ENCODE measurements at regions of chr18 and their contacts with region 1.

Region 1: GRCh38 chr18:61893971-61894750 is 1.4 kb upstream of the RNF152 start:
- DNase-seq: peak; percentile 62 to 86 (median 76)
- H3K4me3 ChIP-seq: peak overlapping the region; percentile 61 to 92 (median 79)
- H3K27ac ChIP-seq: peak overlapping the region in 53 of 59 donors; percentile 4 to 88 (median 71)
- H3K27me3 ChIP-seq: peaks cover 0 to 6% (median 0%) of the 10 kb centered on the region in 45 donors
- CTCF ChIP-seq: peak in 48 of 56 donors; percentile 7 to 72 (median 44)

Region 2: GRCh38 chr18:61575419-61575818 is 318.7 kb before region 1 on chr18:
- intact Hi-C with region 1: loop called (anchors 5 to 10 kb)
- DNase-seq: no peak
- H3K4me3 ChIP-seq: no peak overlapping the region
- H3K27ac ChIP-seq: no peak overlapping the region
- H3K27me3 ChIP-seq: peaks cover 0 to 12% (median 0%) of the 10 kb centered on the region in 45 donors
- CTCF ChIP-seq: no peak

Region 3: DNA sequence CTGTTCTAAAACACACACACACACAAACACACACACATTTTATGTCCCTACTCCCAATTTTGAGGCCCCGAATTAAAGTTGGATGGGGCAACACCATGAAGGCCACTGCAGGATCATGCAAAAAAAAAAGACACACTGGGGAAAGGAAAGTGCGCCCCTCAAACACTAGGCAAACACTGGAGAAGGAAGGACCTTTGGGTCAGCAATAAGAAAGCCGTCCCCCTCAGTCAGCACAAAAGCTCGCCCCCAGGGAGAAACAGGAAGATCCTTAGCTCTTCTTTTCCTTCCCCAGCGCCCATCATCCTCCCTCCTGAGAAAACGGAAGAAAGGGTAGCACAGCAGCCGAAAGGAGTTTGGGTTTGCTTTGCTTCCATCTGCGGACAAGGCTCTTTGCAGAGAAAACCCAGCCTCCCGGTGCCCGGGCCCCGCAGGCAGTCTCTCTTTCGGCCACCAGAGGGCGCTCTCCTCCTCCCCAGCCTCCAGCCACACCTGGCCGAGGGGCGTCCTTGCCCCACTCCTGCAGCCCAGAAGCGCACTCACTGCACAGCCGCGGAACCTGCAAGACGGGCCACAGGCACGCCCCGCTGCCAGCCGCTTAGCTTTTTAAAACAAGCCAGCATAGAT is 312.5 kb before region 1 on chr18:
- intact Hi-C with region 1: loop called (anchors 5 to 10 kb)
- DNase-seq: peak; percentile 40 to 88 (median 66)
- H3K4me3 ChIP-seq: peak overlapping the region; percentile 13 to 63 (median 40)
- H3K27ac ChIP-seq: peak overlapping the region in 19 of 59 donors; percentile 2 to 66 (median 34)
- H3K27me3 ChIP-seq: peaks cover 0 to 12% (median 0%) of the 10 kb centered on the region in 45 donors
- CTCF ChIP-seq: peak; percentile 91 to 99 (median 97)

Region 4: DNA sequence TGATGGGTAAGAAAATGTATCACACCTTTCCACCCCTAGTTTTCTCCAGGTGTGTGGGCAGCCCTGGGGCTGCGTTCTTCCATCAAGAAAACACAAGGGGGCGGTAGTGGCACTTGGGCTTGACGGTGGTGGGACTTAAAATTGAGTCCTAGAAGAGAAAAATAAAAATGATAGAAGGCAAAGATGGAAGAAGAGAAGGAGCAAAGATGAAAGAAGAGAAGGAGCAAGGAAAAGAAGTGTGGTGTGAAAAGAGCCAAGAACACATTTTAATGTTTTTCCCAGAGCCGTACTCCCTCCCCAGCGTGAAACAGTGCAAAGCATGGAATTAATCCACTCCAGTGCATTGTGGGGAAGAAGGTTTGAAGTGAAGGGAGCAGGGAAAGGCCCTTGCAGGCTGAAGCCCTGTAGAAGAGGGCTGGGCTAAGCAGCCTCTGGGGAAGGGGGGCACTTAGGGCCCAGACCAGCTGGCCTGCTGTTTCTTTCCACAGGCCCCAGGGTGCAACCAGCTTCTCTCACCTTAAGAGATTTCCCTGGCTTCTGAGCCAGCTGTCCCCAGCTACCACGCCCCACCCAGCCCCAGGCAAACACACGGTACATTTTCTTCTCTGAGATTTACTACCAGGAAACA is 258.1 kb before region 1 on chr18:
- intact Hi-C with region 1: loop called (anchors 1 to 2 kb)
- DNase-seq: peak in 7 of 10 donors; percentile 9 to 55 (median 24)
- H3K4me3 ChIP-seq: peak overlapping the region in 2 of 59 donors; percentile 25 to 35
- H3K27ac ChIP-seq: peak overlapping the region in 17 of 59 donors; percentile 2 to 71 (median 23)
- H3K27me3 ChIP-seq: peaks cover 0 to 10% (median 0%) of the 10 kb centered on the region in 45 donors
- CTCF ChIP-seq: peak; percentile 30 to 90 (median 74)

Region 5: DNA sequence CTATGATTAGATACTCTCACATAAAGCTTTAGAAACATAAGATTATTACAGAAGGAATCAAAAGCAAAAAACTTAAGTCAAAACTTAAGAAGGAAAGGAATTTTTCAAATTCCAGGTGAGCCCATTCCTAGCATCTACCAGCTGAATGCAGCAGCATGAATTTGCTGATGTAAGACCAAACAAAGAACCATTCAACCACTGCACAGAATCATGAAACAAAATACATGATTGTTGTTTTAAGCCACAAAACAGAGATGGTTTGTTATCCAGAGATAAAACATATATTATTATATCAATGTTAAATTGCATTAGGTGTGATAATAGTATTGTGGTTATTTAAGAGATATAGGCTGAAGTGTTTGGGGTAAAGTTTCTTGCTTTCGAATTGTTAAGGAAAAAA is 263.7 kb after region 1 on chr18:
- intact Hi-C with region 1: no loop called
- DNase-seq: no peak
- H3K4me3 ChIP-seq: peak overlapping the region in 1 of 59 donors; percentile 19
- H3K27ac ChIP-seq: peak overlapping the region in 42 of 59 donors; percentile 1 to 81 (median 52)
- H3K27me3 ChIP-seq: no peaks in the 10 kb centered on the region
- CTCF ChIP-seq: no peak

Measured in dorsolateral prefrontal cortex (tissue), 120 donors.